GM12878 (cell line): ENCODE measurements at regions of chr12 and their contacts with region 1.

Region 1: GRCh38 chr12:12032851-12033588 is 37.7 kb upstream of the BCL2L14 start:
- DNase-seq: peak; percentile 66
- ATAC-seq: peak; percentile 68
- H3K4me3 ChIP-seq: peak overlapping the region; percentile 69
- H3K27ac ChIP-seq: peak overlapping the region; percentile 89
- H3K4me1 ChIP-seq: peaks cover 36% of the 10 kb centered on the region
- H3K27me3 ChIP-seq: no peaks in the 10 kb centered on the region
- CTCF ChIP-seq: peak; percentile 81 to 86 (median 82)
- EP300 ChIP-seq: peak in 1 of 2 experiments; percentile 21; a peak in 1 of 4 replicates
- POLR2A ChIP-seq: no peak
- RAD21 ChIP-seq: peak; percentile 96

Region 2: GRCh38 chr12:11545484-11546330 is 487.3 kb before region 1 on chr12:
- CTCF ChIA-PET with region 1: interaction called, 6 read pairs
- POLR2A ChIA-PET with region 1: interaction called, 6 read pairs
- RAD21 ChIA-PET with region 1: interaction called, 17 read pairs
- SMC1A ChIA-PET with region 1: interaction called, 10 read pairs
- in situ Hi-C with region 1: no loop called
- intact Hi-C with region 1: no loop called
- DNase-seq: peak; percentile 78
- ATAC-seq: peak; percentile 90
- H3K4me3 ChIP-seq: peak overlapping the region; percentile 31; the same call in 1 of the 2 replicates
- H3K27ac ChIP-seq: peak overlapping the region; percentile 94
- H3K4me1 ChIP-seq: peaks cover 27% of the 10 kb centered on the region
- H3K27me3 ChIP-seq: no peaks in the 10 kb centered on the region
- CTCF ChIP-seq: peak in 2 of 3 experiments; percentile 39 to 44; a peak in 2 of 6 replicates
- EP300 ChIP-seq: 0 out of 4 replicates have a peak, but pooled peaks of 1 of the 2 experiments have one; percentile 30
- POLR2A ChIP-seq: peak; percentile 65
- RAD21 ChIP-seq: no peak

Region 3: GRCh38 chr12:11581179-11581755 is 451.8 kb before region 1 on chr12:
- CTCF ChIA-PET with region 1: interaction called, 278 read pairs
- POLR2A ChIA-PET with region 1: interaction called, 11 read pairs
- RAD21 ChIA-PET with region 1: interaction called, 201 read pairs
- SMC1A ChIA-PET with region 1: interaction called, 214 read pairs
- in situ Hi-C with region 1: loop called (anchors 5 kb)
- intact Hi-C with region 1: loop called (anchors 1 kb)
- DNase-seq: no peak
- ATAC-seq: no peak
- H3K4me3 ChIP-seq: no peak overlapping the region
- H3K27ac ChIP-seq: peak overlapping the region; percentile 48; the same call in 1 of the 2 replicates
- H3K4me1 ChIP-seq: peaks cover 38% of the 10 kb centered on the region
- H3K27me3 ChIP-seq: no peaks in the 10 kb centered on the region
- CTCF ChIP-seq: peak; percentile 34 to 58 (median 37); a peak in 3 of 6 replicates
- EP300 ChIP-seq: no peak
- POLR2A ChIP-seq: no peak
- RAD21 ChIP-seq: peak; percentile 91

Region 4: DNA sequence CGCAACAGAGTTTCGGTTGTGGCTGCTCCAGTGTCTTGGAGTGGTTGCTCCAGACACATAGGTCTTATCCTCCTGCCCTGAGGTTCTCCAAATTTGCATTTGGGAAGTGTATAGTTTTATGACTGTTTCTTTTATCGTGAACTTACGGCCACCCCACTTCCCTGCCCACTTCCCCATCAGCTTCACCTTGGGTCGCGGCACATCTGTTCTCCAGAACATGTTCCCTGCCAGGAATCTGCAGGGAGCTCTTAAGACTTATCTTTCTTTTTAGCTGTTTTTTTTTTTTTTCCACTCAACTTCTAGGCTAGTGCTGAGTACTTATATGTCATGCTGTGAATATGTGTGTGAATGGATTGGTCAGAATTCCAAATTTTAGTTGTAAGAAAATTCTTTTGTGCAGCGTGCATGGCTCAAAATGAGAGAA is 308.1 kb before region 1 on chr12:
- CTCF ChIA-PET with region 1: interaction called, 43 read pairs
- POLR2A ChIA-PET with region 1: interaction called, 3 read pairs
- RAD21 ChIA-PET with region 1: interaction called, 6 read pairs
- SMC1A ChIA-PET with region 1: interaction called, 18 read pairs
- in situ Hi-C with region 1: no loop called
- intact Hi-C with region 1: no loop called
- DNase-seq: no peak
- ATAC-seq: no peak
- H3K4me3 ChIP-seq: peak overlapping the region; percentile 8; the same call in 1 of the 2 replicates
- H3K27ac ChIP-seq: peak overlapping the region; percentile 89
- H3K4me1 ChIP-seq: peaks cover 98% of the 10 kb centered on the region
- H3K27me3 ChIP-seq: no peaks in the 10 kb centered on the region
- CTCF ChIP-seq: no peak
- EP300 ChIP-seq: no peak
- POLR2A ChIP-seq: no peak
- RAD21 ChIP-seq: no peak

Region 5: DNA sequence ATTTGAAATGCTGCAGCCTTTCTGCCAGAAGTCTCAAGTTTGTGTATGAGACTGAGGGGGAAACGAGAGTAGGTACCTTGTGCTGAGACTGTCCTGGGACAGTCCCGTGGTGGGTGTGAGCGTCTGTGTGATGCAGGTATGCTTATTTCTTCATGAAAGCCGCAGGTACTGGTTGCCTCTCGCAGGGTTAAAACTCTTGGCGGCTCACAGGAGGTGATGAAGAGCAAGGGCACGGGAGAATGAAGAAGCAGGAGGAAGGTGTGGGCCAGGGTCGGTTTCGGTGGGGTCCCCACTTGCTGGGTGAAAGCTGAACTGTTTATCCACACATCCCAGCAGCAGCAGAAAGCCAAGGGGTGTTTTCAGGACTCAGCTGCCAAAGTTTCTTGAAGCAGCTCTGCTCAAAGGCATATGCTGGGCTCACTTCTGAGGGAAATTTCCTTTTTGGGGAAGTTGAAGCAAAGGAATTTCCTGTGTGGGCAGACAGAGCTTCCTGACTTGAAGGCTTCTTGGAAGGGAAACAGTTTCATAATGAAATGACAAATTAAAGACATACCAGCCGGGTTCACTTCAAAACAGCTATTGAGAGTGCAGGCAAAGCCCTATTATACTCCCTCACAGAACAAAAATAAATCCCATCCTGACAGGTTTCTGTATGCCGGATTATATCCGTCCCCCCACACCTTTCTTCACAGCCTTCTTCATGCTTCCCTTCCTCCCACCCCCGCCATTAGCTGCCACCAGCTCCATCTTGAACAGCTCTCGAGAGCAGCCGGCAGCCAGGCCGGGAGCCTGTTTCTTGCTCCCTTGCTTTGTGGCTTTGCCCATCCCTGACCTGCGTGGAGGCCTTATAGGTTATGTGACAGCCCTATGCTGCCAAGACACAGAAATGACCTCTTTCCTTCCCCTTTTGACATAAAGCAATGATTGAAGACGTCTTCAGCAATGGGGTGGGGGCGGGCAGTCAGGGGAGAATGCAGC is 266.9 kb before region 1 on chr12:
- CTCF ChIA-PET with region 1: interaction called, 13 read pairs
- POLR2A ChIA-PET with region 1: interaction called, 3 read pairs
- RAD21 ChIA-PET with region 1: interaction called, 25 read pairs
- SMC1A ChIA-PET with region 1: interaction called, 51 read pairs
- in situ Hi-C with region 1: no loop called
- intact Hi-C with region 1: loop called (anchors 2 kb)
- DNase-seq: peak; percentile 92
- ATAC-seq: peak; percentile 75
- H3K4me3 ChIP-seq: peak overlapping the region; percentile 11; the same call in 1 of the 2 replicates
- H3K27ac ChIP-seq: peak overlapping the region; percentile 100
- H3K4me1 ChIP-seq: peaks cover 92% of the 10 kb centered on the region
- H3K27me3 ChIP-seq: no peaks in the 10 kb centered on the region
- CTCF ChIP-seq: no peak
- EP300 ChIP-seq: peak; percentile 81 to 89
- POLR2A ChIP-seq: 0 out of 2 replicates have a peak, but pooled peaks have one; percentile 32
- RAD21 ChIP-seq: peak; percentile 19; the same call in 1 of the 2 replicates

Region 6: DNA sequence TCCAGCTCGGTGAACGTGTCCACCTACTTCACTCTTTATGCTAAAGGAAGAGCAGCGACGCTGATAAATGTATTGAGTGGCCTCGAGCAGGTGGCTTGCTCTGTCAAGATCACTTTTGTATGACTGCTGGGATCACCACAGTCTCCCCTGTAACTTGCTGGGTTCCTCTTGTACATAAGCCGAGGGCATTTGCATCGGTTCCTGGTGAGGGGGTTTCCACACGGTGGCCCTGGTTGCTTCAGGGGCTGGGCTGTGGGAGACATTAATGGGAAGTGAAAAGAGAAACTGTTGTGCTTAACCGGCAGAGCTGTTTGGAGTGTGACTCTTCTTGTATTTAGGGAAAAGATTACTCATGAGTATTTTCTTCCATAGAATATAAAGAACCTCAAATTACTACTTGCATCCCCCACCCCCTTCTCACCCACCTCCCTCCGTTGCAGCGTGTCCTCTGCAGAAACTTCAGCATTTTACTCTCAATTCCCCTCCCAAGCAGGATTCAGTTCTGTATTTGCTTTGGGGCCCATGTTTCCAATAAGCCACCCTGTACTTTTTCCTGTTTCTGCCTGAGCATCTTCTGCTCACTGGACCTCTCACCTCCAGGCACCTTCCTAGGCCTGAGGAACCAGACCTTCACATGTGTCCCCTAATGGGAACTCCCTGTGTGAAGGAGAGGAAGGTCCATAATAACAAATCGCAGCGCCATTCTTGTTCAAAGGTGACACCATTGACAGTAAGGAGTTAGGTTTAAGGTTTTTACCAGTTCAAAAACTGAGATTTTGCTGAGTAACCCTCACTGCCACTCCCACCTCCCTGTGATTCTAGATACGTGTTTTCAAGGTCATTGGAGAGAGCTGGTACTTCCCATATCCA is 196.5 kb before region 1 on chr12:
- CTCF ChIA-PET with region 1: interaction called, 35 read pairs
- POLR2A ChIA-PET with region 1: no interaction called
- RAD21 ChIA-PET with region 1: interaction called, 34 read pairs
- SMC1A ChIA-PET with region 1: interaction called, 68 read pairs
- in situ Hi-C with region 1: no loop called
- intact Hi-C with region 1: loop called (anchors 1 kb)
- DNase-seq: peak; percentile 99
- ATAC-seq: peak; percentile 89
- H3K4me3 ChIP-seq: no peak overlapping the region
- H3K27ac ChIP-seq: peak overlapping the region; percentile 97
- H3K4me1 ChIP-seq: peaks cover 76% of the 10 kb centered on the region
- H3K27me3 ChIP-seq: no peaks in the 10 kb centered on the region
- CTCF ChIP-seq: no peak
- EP300 ChIP-seq: peak; percentile 90 to 99
- POLR2A ChIP-seq: peak; percentile 68
- RAD21 ChIP-seq: peak; percentile 25; the same call in 1 of the 2 replicates

Region 7: GRCh38 chr12:12008931-12009611 is 23.9 kb before region 1 on chr12:
- CTCF ChIA-PET with region 1: interaction called, 79 read pairs
- POLR2A ChIA-PET with region 1: interaction called, 5 read pairs
- RAD21 ChIA-PET with region 1: interaction called, 98 read pairs
- SMC1A ChIA-PET with region 1: interaction called, 70 read pairs
- in situ Hi-C with region 1: no loop called
- intact Hi-C with region 1: loop called (anchors 1 kb)
- DNase-seq: peak; percentile 86
- ATAC-seq: peak; percentile 63
- H3K4me3 ChIP-seq: no peak overlapping the region
- H3K27ac ChIP-seq: peak overlapping the region; percentile 90
- H3K4me1 ChIP-seq: peaks cover 57% of the 10 kb centered on the region
- H3K27me3 ChIP-seq: no peaks in the 10 kb centered on the region
- CTCF ChIP-seq: peak; percentile 33 to 45 (median 41); a peak in 5 of 6 replicates
- EP300 ChIP-seq: no peak; a peak in 1 of 4 replicates
- POLR2A ChIP-seq: no peak
- RAD21 ChIP-seq: peak; percentile 71